Mucosa of descending colon (tissue), 3 donors: ENCODE measurements at regions of chrX and their contacts with region 1.

Region 1: GRCh38 chrX:70096052-70096451 is 33.8 kb downstream of the OTUD6A start:
- DNase-seq: peak in 1 of 3 donors; percentile 2
- ATAC-seq: no peak
- H3K4me3 ChIP-seq: no peak overlapping the region
- H3K4me1 ChIP-seq: no peaks in the 10 kb centered on the region
- CTCF ChIP-seq: no peak

Region 2: GRCh38 chrX:69510137-69510715 is 585.8 kb before region 1 on chrX:
- intact Hi-C with region 1: loop called in 1 of 2 experiments (anchors 10 kb)
- DNase-seq: no peak
- ATAC-seq: no peak
- H3K4me3 ChIP-seq: no peak overlapping the region
- H3K4me1 ChIP-seq: no peaks in the 10 kb centered on the region
- CTCF ChIP-seq: no peak

Region 3: DNA sequence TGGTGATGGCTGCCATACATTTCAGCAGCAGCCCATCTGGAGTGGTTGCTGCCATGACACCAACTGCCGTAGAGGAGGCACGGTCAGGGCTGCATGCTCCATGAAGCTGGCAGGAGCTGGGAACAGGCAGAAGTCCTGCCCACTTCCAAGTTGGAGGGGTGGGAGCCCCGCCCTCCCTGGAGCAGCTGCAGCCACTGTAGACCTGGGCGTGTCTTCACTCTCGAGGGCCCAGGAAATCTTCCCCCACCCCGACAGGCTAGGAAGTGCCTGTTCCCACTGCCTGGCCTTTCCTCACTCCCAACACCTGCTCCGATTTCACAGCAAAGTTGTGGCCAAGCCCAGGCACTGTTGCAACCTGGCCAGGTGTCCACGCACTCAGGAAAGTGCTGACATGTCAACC is 549.6 kb before region 1 on chrX:
- intact Hi-C with region 1: loop called in 1 of 2 experiments (anchors 10 kb)
- DNase-seq: peak in 1 of 3 donors; percentile 35
- ATAC-seq: peak; percentile 24
- H3K4me3 ChIP-seq: no peak overlapping the region
- H3K4me1 ChIP-seq: no peaks in the 10 kb centered on the region
- CTCF ChIP-seq: no peak

Region 4: GRCh38 chrX:69568828-69569227 is 527.2 kb before region 1 on chrX:
- intact Hi-C with region 1: no loop called
- DNase-seq: no peak
- ATAC-seq: no peak
- H3K4me3 ChIP-seq: no peak overlapping the region
- H3K4me1 ChIP-seq: no peaks in the 10 kb centered on the region
- CTCF ChIP-seq: no peak